Psoas muscle (tissue), 8 donors: ENCODE measurements at regions of chr12 and their contacts with region 1.

Region 1: GRCh38 chr12:120686690-120687577 is at the start of gene MLEC:
- DNase-seq: peak; percentile 99
- ATAC-seq: peak; percentile 91 to 92 (median 92)
- H3K4me3 ChIP-seq: peak within 1 kb of the TSS; percentile 96
- H3K27ac ChIP-seq: peak within 1 kb of the TSS; percentile 95
- H3K4me1 ChIP-seq: peaks cover 37% of the 10 kb centered on the region
- H3K27me3 ChIP-seq: no peaks in the 10 kb centered on the region
- CTCF ChIP-seq: no peak
- total RNA-seq, gene MLEC: 49.2 to 63.8 (median 60.9) TPM

Region 2: GRCh38 chr12:120445911-120446843 is 240.8 kb before region 1 on chr12 and contains the starts of genes GATC and TRIAP1:
- intact Hi-C with region 1: loop called in 1 of 2 experiments (anchors 10 kb)
- DNase-seq: peak; percentile 83 to 93
- ATAC-seq: peak; percentile 97 to 99 (median 99)
- H3K4me3 ChIP-seq: peak within 1 kb of the TSS; percentile 95
- H3K27ac ChIP-seq: peak within 1 kb of the TSS; percentile 89
- H3K4me1 ChIP-seq: peaks cover 21% of the 10 kb centered on the region
- H3K27me3 ChIP-seq: no peaks in the 10 kb centered on the region
- CTCF ChIP-seq: no peak
- total RNA-seq, gene GATC: 8.7 to 17.6 (median 10.1) TPM
- total RNA-seq, gene TRIAP1: 24.4 to 37.3 (median 31.0) TPM

Region 3: DNA sequence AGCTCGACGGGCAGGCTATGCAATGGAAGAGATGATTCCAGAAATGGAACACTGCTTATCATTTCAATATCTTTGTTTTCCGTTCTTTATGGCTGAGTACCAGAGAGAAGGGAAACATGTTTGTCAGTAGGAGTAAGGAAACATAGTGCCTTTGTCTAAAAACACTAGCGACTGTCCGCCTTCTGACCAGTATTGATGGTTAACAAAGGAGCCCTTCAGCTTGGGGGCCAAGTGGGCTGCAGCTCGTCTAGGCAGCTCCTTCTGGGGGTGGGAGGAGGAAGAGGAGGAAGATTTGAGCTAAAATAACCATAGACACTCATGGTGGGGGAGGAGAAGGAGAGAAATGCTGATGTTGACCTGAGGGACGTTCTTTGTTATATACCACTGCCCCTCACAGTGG is 172.9 kb before region 1 on chr12:
- intact Hi-C with region 1: no loop called
- DNase-seq: no peak
- ATAC-seq: no peak
- H3K4me3 ChIP-seq: no peak overlapping the region
- H3K27ac ChIP-seq: no peak overlapping the region
- H3K4me1 ChIP-seq: no peaks in the 10 kb centered on the region
- H3K27me3 ChIP-seq: no peaks in the 10 kb centered on the region
- CTCF ChIP-seq: no peak

Region 4: DNA sequence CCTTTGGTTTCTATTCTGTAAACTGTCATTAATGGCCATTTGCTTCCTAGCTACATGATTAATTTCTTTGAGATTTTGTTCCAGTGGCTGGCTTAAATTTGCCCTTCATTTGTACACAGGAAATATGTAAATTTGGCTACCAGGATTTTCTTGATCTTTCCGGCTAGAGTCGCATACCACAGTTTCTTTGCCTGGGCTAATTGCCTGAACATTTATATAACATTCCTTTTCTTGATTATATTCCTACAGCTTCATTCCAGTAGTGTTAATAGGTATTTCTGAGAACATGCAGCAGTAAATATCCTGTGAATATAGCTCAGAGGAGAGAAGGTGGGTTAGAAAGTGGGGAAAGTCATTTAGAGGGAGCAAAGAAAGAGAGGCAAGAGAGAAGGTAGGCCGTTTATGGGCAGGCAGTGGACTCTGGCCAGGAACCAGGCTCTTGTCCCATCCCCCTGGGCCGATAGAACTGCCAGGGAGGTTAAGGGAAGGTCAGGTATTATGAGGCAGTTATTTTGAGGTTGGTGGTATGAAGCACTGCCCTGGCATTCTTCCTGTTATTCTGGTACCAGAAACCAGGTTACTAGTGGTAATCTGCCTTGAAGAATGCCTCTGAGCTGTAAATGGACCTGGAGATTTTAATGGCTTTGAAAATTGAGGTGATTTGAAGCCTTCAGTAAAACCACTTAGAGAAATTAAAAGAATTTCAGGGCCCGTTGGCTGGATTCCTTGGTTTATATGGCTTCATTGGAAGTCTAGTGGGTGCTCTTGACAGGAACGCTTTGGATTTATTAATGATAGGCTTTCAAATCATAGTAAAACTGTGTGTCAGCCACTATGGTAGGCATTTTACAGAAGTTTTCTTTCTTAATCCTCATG is 148.4 kb before region 1 on chr12:
- intact Hi-C with region 1: no loop called
- DNase-seq: peak; percentile 70 to 89
- ATAC-seq: peak; percentile 80 to 86 (median 84)
- H3K4me3 ChIP-seq: peak overlapping the region; percentile 96
- H3K27ac ChIP-seq: peak overlapping the region; percentile 98
- H3K4me1 ChIP-seq: peaks cover 62% of the 10 kb centered on the region
- H3K27me3 ChIP-seq: no peaks in the 10 kb centered on the region
- CTCF ChIP-seq: no peak

Region 5: GRCh38 chr12:120649442-120650232 is 37.3 kb before region 1 on chr12:
- intact Hi-C with region 1: loop called in 1 of 2 experiments (anchors 5 kb)
- DNase-seq: no peak
- ATAC-seq: no peak
- H3K4me3 ChIP-seq: peak overlapping the region; percentile 54
- H3K27ac ChIP-seq: peak overlapping the region; percentile 54
- H3K4me1 ChIP-seq: peaks cover 6% of the 10 kb centered on the region
- H3K27me3 ChIP-seq: peaks cover 0 to 22% (median 0%) of the 10 kb centered on the region in 3 donors
- CTCF ChIP-seq: no peak

Region 6: GRCh38 chr12:120669055-120669840 is 17.7 kb before region 1 on chr12:
- intact Hi-C with region 1: no loop called
- DNase-seq: peak in 1 of 2 donors; percentile 26
- ATAC-seq: no peak
- H3K4me3 ChIP-seq: no peak overlapping the region
- H3K27ac ChIP-seq: no peak overlapping the region
- H3K4me1 ChIP-seq: no peaks in the 10 kb centered on the region
- H3K27me3 ChIP-seq: no peaks in the 10 kb centered on the region
- CTCF ChIP-seq: no peak

Region 7: GRCh38 chr12:120710031-120710804 is 23.3 kb after region 1 on chr12 and contains the start of gene UNC119B:
- intact Hi-C with region 1: loop called (anchors 2 kb)
- DNase-seq: peak; percentile 72 to 82
- ATAC-seq: peak; percentile 86 to 91 (median 88)
- H3K4me3 ChIP-seq: peak within 1 kb of the TSS; percentile 92
- H3K27ac ChIP-seq: peak within 1 kb of the TSS; percentile 85
- H3K4me1 ChIP-seq: peaks cover 18% of the 10 kb centered on the region
- H3K27me3 ChIP-seq: no peaks in the 10 kb centered on the region
- CTCF ChIP-seq: no peak
- total RNA-seq, gene UNC119B: 7.5 to 10.9 (median 7.9) TPM